CD8-positive, alpha-beta memory T cell (primary cell): ENCODE measurements at regions of chr5 and their contacts with region 1.

Region 1: DNA sequence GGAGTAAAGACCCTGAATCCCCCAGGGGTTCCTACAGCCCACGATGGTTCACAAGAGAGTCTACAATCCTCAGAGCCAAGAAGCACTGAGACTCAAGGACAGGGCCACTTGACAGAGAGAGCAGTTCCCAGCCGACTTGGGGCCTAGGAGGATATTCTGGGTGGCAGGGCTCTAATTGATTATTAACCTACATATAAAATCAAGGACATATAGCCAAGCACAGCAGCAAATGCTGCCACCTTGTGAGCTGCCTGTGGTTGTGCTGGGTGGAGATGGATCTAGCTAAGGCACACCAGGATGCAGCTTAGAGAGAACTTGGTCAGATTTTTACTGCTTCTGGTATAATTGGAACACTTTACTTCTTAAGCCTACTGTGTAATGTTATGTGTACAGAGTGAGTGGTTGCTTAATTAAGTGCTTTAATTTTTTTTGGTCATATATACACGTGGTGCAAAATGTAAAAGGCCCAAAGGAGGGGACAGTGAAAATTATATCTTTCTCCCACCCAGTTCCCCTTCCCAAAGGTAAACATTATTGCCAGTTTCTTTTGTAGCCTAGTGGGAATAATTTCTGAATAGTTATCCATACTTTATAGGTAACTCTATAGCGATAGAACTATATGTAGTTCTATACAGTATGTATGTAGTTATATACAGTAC is 78.8 kb downstream of the F2RL2 start:
- DNase-seq: peak; percentile 26 to 69 (median 36)
- H3K4me3 ChIP-seq: peak overlapping the region; percentile 37
- H3K4me3 Mint-ChIP-seq: peak overlapping the region; percentile 63 to 90 (median 80)
- H3K27ac ChIP-seq: peak overlapping the region; percentile 87
- H3K27ac Mint-ChIP-seq: peak overlapping the region; percentile 90 to 99 (median 98)
- H3K4me1 ChIP-seq: peaks cover 81% of the 10 kb centered on the region
- H3K4me1 Mint-ChIP-seq: peaks cover 87 to 98% (median 96%) of the 10 kb centered on the region in 3 donors
- H3K27me3 ChIP-seq: no peaks in the 10 kb centered on the region
- H3K27me3 Mint-ChIP-seq: no peaks in the 10 kb centered on the region

Region 2: DNA sequence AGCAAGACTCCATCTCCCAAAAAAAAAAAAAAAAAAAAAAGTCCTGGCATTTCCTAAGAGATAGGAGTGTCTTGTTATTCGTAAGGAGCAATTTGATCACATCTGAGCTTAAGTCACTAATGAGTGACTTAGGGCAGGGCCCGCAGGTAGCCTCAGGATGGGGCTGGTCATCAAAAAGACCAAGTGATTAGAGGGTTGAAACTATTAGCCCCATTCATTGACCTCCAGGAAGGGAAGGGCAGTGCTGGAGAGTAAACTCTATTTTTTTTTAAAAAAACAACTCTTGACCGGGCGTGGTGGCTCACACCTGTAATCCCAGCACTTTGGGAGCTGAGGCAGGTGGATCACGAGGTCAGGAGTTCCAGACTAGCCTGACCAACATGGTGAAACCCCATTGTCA is 187.5 kb before region 1 on chr5:
- CTCF ChIA-PET with region 1: no interaction called
- POLR2A ChIA-PET with region 1: no interaction called
- DNase-seq: no peak
- H3K4me3 ChIP-seq: no peak overlapping the region
- H3K4me3 Mint-ChIP-seq: no peak overlapping the region
- H3K27ac ChIP-seq: no peak overlapping the region
- H3K27ac Mint-ChIP-seq: no peak overlapping the region
- H3K4me1 ChIP-seq: no peaks in the 10 kb centered on the region
- H3K4me1 Mint-ChIP-seq: peaks cover 0 to 5% (median 0%) of the 10 kb centered on the region in 3 donors
- H3K27me3 ChIP-seq: no peaks in the 10 kb centered on the region
- H3K27me3 Mint-ChIP-seq: no peaks in the 10 kb centered on the region

Region 3: DNA sequence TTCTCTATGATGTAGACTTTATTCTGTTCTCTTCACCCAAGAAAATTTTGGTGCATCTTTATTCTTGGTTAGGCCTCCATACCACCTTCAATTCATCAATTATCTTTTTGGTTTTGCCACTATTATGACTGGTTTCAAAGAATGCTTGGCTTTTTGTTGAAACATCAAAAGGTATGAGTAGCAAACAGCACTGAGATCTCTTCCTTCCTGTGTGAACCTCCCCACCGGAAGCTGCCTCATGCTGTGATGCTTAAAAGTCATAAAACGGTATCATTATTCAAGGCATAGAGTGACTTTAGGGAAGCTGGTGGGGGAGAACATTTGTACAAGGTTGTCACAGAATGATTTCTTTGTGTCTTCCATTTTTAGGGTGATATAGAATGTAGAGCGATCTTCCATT is 70.7 kb before region 1 on chr5:
- CTCF ChIA-PET with region 1: interaction called, 7 read pairs
- POLR2A ChIA-PET with region 1: interaction called, 11 read pairs
- DNase-seq: peak; percentile 44 to 80 (median 75)
- H3K4me3 ChIP-seq: no peak overlapping the region
- H3K4me3 Mint-ChIP-seq: peak overlapping the region in 6 of 7 donors; percentile 19 to 89 (median 52)
- H3K27ac ChIP-seq: no peak overlapping the region
- H3K27ac Mint-ChIP-seq: peak overlapping the region; percentile 70 to 98 (median 87)
- H3K4me1 ChIP-seq: peaks cover 70% of the 10 kb centered on the region
- H3K4me1 Mint-ChIP-seq: peaks cover 75 to 90% (median 88%) of the 10 kb centered on the region in 3 donors
- H3K27me3 ChIP-seq: no peaks in the 10 kb centered on the region
- H3K27me3 Mint-ChIP-seq: no peaks in the 10 kb centered on the region

Region 4: DNA sequence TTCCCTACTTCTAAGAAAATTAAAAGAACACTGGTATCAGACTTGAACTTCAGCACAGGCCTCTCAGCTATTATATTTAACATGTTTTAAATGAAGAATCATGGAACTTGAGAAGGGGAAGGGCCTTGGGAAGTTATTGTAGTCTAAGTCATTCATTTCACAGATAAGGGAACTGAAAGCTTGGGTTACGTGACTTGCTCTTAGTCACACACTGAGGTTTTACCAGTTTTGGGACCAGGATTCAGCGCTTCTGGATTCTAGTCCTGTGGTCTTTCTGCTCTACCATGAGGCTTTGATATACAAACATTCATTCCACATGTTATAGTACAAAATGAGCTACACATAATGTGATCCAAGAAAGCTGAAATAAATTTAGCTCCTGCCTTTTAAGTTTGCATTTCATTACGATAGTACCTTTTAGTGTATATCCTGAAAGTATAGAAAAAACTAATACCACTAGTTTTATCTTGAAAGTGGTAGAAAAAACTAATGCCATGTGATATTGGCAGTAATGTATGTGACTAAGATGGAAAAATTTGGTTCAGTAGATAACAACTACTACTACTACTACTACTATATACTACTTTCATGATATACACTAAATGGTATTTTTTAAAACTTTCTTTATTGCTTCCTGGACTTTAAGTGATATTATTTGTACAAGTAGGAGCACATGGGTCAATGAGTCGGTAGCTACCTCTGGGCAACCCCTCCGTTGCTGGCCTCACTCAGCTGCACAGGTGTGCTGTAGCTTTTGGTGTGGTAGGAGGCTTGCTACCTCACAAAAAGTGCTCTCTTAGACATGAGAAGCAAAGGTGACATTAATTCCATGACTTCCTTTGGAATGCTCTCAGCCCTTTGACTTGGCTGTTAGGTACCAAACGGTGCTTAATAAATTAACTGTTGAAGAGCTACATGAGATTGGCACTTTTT is 38.1 kb after region 1 on chr5:
- CTCF ChIA-PET with region 1: interaction called, 15 read pairs
- POLR2A ChIA-PET with region 1: interaction called, 5 read pairs
- DNase-seq: no peak
- H3K4me3 ChIP-seq: no peak overlapping the region
- H3K4me3 Mint-ChIP-seq: no peak overlapping the region
- H3K27ac ChIP-seq: no peak overlapping the region
- H3K27ac Mint-ChIP-seq: peak overlapping the region in 4 of 8 donors; percentile 34 to 78 (median 64)
- H3K4me1 ChIP-seq: peaks cover 5% of the 10 kb centered on the region
- H3K4me1 Mint-ChIP-seq: peaks cover 22 to 39% (median 37%) of the 10 kb centered on the region in 3 donors
- H3K27me3 ChIP-seq: no peaks in the 10 kb centered on the region
- H3K27me3 Mint-ChIP-seq: no peaks in the 10 kb centered on the region